Panc1 (cell line): ENCODE measurements at regions of chr9 and their contacts with region 1.

Region 1: GRCh38 chr9:125361837-125362531 is 100.4 kb downstream of the GAPVD1 start:
- DNase-seq: no peak
- ATAC-seq: no peak
- H3K4me3 ChIP-seq: no peak overlapping the region
- H3K27ac ChIP-seq: no peak overlapping the region
- H3K4me1 ChIP-seq: no peaks in the 10 kb centered on the region
- H3K27me3 ChIP-seq: no peaks in the 10 kb centered on the region
- CTCF ChIP-seq: peak; percentile 47

Region 2: GRCh38 chr9:125317704-125318103 is 44.3 kb before region 1 on chr9:
- CTCF ChIA-PET with region 1: no interaction called
- POLR2A ChIA-PET with region 1: interaction called, 11 read pairs
- in situ Hi-C with region 1: no loop called
- intact Hi-C with region 1: no loop called
- DNase-seq: no peak
- ATAC-seq: no peak
- H3K4me3 ChIP-seq: no peak overlapping the region
- H3K27ac ChIP-seq: no peak overlapping the region
- H3K4me1 ChIP-seq: no peaks in the 10 kb centered on the region
- H3K27me3 ChIP-seq: no peaks in the 10 kb centered on the region
- CTCF ChIP-seq: no peak